ENCODE measurements at regions of chr7 and their contacts with region 1.

Region 1: DNA sequence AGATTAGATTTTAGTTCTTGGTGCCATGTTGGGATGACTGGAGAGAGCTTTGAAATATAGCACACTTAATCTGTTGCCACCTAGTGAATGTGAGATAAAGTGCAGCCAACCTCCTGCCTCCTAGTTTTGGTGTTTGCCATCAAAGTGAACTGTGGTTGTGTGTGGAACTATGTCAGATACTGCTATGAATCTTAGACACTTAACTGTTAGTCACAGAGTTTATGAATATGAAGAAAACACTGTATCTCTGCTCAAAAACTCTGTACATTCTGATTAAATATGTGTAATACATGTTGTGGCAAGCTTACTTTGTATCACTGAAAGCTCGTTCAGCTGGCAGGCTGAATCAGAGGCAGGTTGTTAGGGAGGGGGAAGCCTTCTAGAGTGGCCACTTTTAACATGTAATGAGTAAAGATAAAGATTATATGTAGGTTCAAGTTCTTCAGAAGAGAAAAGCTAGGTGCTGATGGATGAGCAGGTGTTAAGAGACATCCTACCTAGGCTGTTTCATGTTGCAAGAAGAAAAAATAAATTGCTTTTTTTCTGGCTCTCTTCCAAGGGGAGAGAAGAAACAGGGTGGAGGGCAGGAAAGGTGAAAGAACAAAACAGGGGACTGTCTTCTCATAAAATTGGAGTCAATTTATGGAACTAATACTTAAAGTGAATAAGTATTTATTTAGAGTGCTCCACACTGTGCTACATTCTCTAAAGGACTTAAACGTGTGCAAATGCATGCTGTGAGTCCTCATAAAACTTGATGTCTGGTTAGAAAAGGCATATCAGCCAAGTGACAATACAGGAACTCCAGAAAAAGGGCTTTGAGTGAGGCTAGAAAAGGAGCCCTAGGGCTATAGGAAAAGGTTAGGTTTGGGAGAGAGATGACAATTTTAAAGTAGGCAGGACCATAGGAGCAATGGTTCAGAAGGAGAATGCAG is 14.1 kb upstream of the LAMB1 start:
- DNase-seq: no peak

Region 2: DNA sequence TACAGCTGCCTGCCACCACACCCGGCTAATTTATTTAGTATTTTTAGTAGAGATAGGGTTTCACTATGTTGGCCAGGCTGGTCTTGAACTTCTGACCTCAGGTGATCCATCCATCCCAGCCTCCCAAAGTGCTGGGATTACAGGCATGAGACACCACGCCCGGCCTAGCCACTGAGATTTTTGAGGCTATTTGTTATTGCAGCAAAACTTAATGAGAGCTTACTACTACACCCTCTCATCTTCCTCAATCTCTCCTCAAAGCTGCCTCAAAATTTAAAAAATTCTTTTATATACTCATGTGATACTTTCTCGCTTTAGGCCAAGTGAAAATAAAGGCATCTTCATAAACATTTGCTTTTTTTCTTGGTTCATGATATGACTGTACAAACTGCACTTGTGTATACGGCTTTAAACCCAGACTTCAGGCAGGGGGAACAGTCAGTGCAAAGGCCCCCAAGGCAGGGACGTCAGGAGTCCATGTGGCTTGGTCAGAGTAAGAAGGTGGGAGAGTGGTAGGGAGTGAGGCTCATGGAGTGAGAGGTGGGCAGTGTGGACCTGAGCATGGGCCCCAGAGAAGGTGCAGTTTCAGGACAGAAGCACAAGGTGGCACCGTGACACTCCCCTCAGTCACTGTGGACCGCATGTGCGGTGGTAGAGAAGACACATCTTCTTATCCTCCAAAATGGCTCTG is 1960.5 kb before region 1 on chr7:
- intact Hi-C with region 1: loop called in 1 of 2 experiments (anchors 5 kb)
- DNase-seq: peak; percentile 88

Region 3: GRCh38 chr7:107450970-107451369 is 566.1 kb before region 1 on chr7:
- intact Hi-C with region 1: no loop called
- DNase-seq: no peak

Region 4: GRCh38 chr7:107939573-107940489 is 77.3 kb before region 1 on chr7:
- intact Hi-C with region 1: loop called in 1 of 2 experiments (anchors 10 kb)
- DNase-seq: peak; percentile 92